Aorta (tissue), 5 donors: ENCODE measurements at regions of chr12 and their contacts with region 1.

Region 1: DNA sequence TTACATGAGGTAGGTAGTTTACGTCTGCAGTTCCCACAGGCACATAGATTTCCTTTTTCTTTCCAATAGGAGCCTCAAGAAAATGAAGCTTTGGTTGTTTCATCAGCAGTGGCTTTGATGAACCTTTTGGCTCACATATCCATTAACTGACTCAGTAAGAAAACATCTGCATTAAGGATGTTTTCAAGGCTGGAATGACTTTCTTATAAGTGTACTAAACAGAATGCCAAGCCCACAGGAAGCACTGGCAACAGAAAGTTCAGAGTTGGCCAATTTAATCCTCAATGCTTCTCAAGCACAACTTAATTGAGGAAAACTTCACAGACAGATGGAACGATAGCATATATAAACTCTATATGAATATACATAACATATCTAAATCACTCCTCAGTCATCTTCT is 63.5 kb downstream of the ST8SIA1 start:
- DNase-seq: no peak
- ATAC-seq: no peak
- H3K4me3 ChIP-seq: no peak overlapping the region
- H3K27ac ChIP-seq: no peak overlapping the region
- H3K4me1 ChIP-seq: peaks cover 3 to 7% of the 10 kb centered on the region in 2 donors
- H3K27me3 ChIP-seq: no peaks in the 10 kb centered on the region

Region 2: GRCh38 chr12:22299294-22299912 is 28.4 kb after region 1 on chr12:
- intact Hi-C with region 1: loop called in 1 of 2 experiments (anchors 1 kb)
- DNase-seq: no peak
- ATAC-seq: no peak
- H3K4me3 ChIP-seq: no peak overlapping the region
- H3K27ac ChIP-seq: no peak overlapping the region
- H3K4me1 ChIP-seq: no peaks in the 10 kb centered on the region
- H3K27me3 ChIP-seq: no peaks in the 10 kb centered on the region